Ovary (tissue), 10 donors: ENCODE measurements at regions of chr3 and their contacts with region 1.

Region 1: GRCh38 chr3:55485211-55485791 is 1.8 kb downstream of the WNT5A start:
- DNase-seq: peak; percentile 80 to 91 (median 88)
- H3K4me3 ChIP-seq: peak overlapping the region; percentile 67
- H3K27ac ChIP-seq: peak overlapping the region; percentile 66 to 85
- H3K4me1 ChIP-seq: peaks cover 8% of the 10 kb centered on the region
- H3K27me3 ChIP-seq: no peaks in the 10 kb centered on the region
- CTCF ChIP-seq: peak; percentile 33 to 86 (median 33)
- EP300 ChIP-seq: no peak
- POLR2A ChIP-seq: no peak

Region 2: DNA sequence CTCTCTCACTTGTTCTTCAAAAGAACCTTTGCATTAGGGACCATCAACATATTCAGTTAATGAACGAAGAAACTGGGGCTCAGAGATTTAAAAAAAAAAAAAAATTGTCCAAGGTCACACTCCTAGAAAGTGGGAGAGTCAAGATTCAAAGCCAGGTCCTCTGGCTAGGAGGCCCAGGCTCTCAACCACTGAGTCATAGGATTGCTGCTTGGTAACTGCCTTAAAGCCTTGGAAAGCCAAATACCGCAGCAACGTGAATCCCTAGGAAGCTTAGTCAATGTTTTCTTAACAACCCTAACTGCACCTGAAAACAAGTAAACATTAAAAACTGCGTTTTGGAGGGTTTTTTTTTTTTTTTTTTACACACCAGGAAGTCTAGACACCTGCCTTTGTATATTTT is 154.9 kb before region 1 on chr3:
- intact Hi-C with region 1: no loop called
- DNase-seq: peak in 1 of 5 donors; percentile 17
- H3K4me3 ChIP-seq: no peak overlapping the region
- H3K27ac ChIP-seq: no peak overlapping the region
- H3K4me1 ChIP-seq: no peaks in the 10 kb centered on the region
- H3K27me3 ChIP-seq: no peaks in the 10 kb centered on the region
- CTCF ChIP-seq: no peak
- EP300 ChIP-seq: no peak
- POLR2A ChIP-seq: no peak

Region 3: DNA sequence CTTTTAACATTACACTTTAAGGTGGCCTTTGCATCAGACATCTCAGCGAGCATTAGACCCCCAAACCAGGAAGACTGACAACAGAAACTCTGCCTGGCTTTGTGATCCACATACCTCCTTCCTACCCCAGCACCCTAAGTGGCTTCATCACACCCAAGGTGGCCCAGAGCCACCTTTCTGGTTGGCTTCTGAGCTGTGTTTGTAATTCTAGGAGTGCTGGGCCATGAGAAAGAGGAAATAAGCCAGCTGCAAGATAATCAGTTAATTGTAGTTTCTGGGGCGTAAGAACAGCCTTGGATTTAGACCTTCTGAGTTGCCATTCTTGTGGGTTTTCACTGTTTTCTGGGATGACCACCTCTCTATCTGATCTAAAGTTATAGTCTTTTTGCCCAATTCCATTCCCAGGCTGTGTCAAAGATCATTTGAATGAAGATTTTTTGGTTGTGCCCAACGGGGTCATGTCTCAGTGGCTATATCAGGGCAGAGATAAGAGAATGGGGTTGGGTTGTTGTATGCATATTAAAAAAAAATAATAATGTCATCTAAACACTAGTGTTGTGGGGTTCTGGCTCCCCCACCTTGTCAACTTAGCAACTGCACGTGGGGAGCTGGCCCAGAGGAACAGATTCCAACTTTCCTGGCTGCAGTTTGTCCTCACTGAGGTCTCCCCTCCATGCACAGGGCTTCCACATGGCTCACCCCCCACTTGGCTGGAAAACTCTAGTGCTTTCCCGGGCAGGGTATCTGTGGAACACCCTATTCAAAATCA is 236.6 kb after region 1 on chr3:
- intact Hi-C with region 1: loop called in 1 of 4 experiments (anchors 10 kb)
- DNase-seq: peak in 3 of 5 donors; percentile 21 to 38 (median 28)
- H3K4me3 ChIP-seq: no peak overlapping the region
- H3K27ac ChIP-seq: no peak overlapping the region
- H3K4me1 ChIP-seq: peaks cover 6% of the 10 kb centered on the region
- H3K27me3 ChIP-seq: no peaks in the 10 kb centered on the region
- CTCF ChIP-seq: peak in 1 of 3 donors; percentile 22
- EP300 ChIP-seq: no peak
- POLR2A ChIP-seq: no peak

Region 4: DNA sequence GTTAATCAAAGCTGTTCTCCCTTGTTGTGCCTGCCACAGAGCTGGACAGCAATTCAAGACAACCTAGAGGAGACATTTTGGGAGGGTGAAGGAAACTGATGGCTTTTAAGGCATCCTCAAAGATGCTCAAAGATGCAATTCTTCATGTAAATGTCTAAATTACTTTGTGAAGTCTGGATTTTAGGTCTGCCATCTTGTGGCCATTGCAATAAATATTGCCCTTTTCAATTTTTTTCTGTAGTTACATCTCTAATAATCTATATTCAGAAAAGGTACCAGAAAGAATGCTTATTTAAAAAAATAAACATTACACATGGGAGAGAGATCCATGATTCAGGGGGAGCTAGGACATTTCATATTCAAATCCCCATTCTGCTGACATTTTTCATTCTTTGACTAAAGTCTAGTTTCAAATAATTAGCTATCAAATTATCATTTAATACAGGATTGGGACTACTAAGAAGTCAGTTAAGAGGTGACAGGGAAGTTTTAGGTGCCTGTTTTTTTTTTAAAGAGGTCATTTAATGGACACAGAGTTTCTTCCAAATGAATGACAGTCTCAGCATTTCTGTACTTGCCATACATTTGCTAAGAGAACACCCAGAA is 261.6 kb after region 1 on chr3:
- intact Hi-C with region 1: loop called in 2 of 4 experiments (anchors 5 kb)
- DNase-seq: no peak
- H3K4me3 ChIP-seq: no peak overlapping the region
- H3K27ac ChIP-seq: no peak overlapping the region
- H3K4me1 ChIP-seq: no peaks in the 10 kb centered on the region
- H3K27me3 ChIP-seq: no peaks in the 10 kb centered on the region
- CTCF ChIP-seq: peak in 2 of 3 donors; percentile 31 to 37
- EP300 ChIP-seq: no peak
- POLR2A ChIP-seq: no peak

Region 5: DNA sequence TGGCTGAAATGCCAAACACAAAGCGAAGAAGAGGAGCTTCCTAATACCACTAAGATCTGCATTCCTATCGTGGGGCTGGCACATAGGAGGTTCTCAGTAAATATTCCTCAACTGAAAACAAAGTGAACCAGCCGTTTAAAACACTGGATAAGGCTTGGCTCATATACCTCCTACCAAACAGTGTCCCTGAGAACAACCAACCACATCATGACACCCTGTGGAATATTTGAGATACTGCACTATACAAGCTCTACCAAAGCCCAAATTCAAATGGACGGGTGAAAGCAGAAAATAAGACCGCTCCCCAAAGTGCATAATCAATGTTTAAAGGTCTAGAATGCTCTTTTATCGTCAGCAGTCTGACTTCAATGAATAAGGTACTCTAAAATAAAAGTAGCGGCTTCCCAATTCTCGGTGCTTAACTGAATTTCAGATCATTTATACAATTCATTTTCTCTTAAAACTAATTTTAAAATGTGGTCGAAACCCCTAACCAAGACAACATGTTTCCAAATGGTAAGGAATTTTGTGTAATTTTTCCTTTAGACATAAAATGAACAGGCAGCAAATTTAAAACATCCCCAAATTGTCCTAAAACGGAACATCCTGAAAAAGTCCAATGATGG is 557.1 kb after region 1 on chr3:
- intact Hi-C with region 1: loop called in 3 of 4 experiments (anchors 5 to 10 kb)
- DNase-seq: no peak
- H3K4me3 ChIP-seq: no peak overlapping the region
- H3K27ac ChIP-seq: no peak overlapping the region
- H3K4me1 ChIP-seq: no peaks in the 10 kb centered on the region
- H3K27me3 ChIP-seq: no peaks in the 10 kb centered on the region
- CTCF ChIP-seq: peak; percentile 53 to 66 (median 59)
- EP300 ChIP-seq: no peak
- POLR2A ChIP-seq: no peak

Region 6: GRCh38 chr3:56251343-56251945 is 766.1 kb after region 1 on chr3:
- intact Hi-C with region 1: loop called in 3 of 4 experiments (anchors 5 to 10 kb)
- DNase-seq: peak in 4 of 5 donors; percentile 28 to 69 (median 54)
- H3K4me3 ChIP-seq: no peak overlapping the region
- H3K27ac ChIP-seq: no peak overlapping the region
- H3K4me1 ChIP-seq: no peaks in the 10 kb centered on the region
- H3K27me3 ChIP-seq: no peaks in the 10 kb centered on the region
- CTCF ChIP-seq: peak; percentile 35 to 68 (median 67)
- EP300 ChIP-seq: no peak
- POLR2A ChIP-seq: no peak